Cardiac septum (tissue), 1 donor: ENCODE measurements at regions of chr7 and their contacts with region 1.

Region 1: GRCh38 chr7:74709880-74710671 is 52.6 kb downstream of the GTF2I start:
- DNase-seq: no peak

Region 2: DNA sequence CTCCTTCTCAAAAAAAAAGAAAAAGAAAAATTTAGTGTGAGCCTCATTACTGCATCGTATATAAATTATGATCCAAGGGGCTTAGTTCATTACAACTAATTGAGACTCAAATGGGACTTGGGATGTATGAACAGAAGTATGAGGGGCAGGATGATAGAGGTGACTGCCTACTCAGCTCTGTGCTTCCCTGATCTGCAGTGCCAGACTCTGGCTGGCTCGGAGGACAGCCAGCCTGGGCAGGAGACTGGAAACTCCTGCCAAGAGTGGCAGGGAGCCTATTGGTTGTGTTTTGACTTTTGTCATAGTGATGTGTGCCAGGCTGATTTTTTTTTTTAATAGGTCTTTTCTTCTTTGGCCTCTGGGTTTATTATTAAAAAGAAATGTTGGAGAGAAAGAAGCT is 330.1 kb before region 1 on chr7:
- intact Hi-C with region 1: no loop called
- DNase-seq: no peak

Region 3: GRCh38 chr7:74417419-74417971 is 292.6 kb before region 1 on chr7:
- intact Hi-C with region 1: no loop called
- DNase-seq: peak; percentile 86

Region 4: GRCh38 chr7:74653686-74654181 is 56.3 kb before region 1 on chr7:
- intact Hi-C with region 1: no loop called
- DNase-seq: no peak

Region 5: DNA sequence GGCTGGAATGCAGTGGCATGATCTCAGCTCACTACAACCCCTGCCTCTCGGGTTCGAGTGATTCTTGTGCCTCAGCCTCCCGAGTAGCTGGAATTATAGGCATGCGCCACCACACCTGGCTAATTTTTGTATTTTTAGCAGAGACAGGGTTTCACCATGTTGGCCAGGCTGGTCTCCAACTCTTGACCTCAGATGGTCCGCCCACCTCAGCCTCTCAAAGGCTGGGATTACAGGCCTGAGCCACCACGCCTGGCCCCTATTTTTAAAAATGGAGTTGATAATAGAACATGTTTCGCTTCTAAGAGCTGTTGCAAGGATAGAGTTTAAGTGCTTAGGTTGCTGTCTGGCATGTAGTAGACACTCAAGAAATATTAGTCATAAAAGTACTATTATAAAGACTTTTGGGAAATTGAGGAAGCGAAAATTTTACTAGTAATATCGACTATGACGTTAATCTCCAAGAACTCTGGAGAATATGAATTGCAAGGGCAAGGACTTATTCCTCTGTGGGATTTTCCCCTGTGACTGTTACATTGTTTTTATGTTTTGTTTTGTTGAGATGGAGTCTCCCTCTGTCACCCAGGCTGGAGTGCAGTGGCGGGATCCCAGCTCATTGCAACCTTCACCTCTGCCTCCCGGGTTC is 44.7 kb before region 1 on chr7:
- intact Hi-C with region 1: loop called (anchors 10 kb)
- DNase-seq: peak; percentile 46